CD8-positive, alpha-beta T cell (primary cell): ENCODE measurements at regions of chr17 and their contacts with region 1.

Region 1: GRCh38 chr17:11969565-11969964 is 27.7 kb downstream of the ZNF18 start:
- DNase-seq: no peak
- ATAC-seq: no peak
- H3K4me3 ChIP-seq: no peak overlapping the region
- H3K4me3 Mint-ChIP-seq: no peak overlapping the region
- H3K27ac ChIP-seq: no peak overlapping the region
- H3K27ac Mint-ChIP-seq: no peak overlapping the region
- H3K4me1 ChIP-seq: no peaks in the 10 kb centered on the region
- H3K4me1 Mint-ChIP-seq: no peaks in the 10 kb centered on the region
- H3K27me3 ChIP-seq: no peaks in the 10 kb centered on the region
- H3K27me3 Mint-ChIP-seq: no peaks in the 10 kb centered on the region
- CTCF ChIP-seq: no peak

Region 2: DNA sequence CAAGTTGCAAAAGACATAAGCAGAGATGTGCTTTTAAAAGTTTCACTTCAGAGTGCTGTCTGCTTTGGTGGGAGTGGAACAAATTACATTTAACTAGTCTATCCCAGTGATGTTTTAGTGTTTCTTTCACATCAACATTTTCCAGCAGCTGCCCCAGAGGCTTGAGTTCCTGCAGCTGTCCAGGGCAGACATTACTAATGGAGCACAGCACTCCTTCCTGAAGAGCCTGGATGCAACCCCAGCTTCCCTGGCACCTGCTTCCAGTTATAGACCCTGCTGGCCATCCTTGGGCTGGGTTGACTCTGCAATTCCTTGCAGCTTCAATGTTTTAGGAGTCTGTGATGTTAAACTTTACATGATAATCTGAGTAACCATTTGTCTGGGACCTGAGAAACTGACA is 1070.3 kb before region 1 on chr17:
- CTCF ChIA-PET with region 1: no interaction called
- POLR2A ChIA-PET with region 1: no interaction called
- intact Hi-C with region 1: loop called in 1 of 2 experiments (anchors 5 kb)
- DNase-seq: no peak
- ATAC-seq: no peak
- H3K4me3 ChIP-seq: no peak overlapping the region
- H3K4me3 Mint-ChIP-seq: no peak overlapping the region
- H3K27ac ChIP-seq: no peak overlapping the region
- H3K27ac Mint-ChIP-seq: no peak overlapping the region
- H3K4me1 ChIP-seq: no peaks in the 10 kb centered on the region
- H3K4me1 Mint-ChIP-seq: no peaks in the 10 kb centered on the region
- H3K27me3 ChIP-seq: no peaks in the 10 kb centered on the region
- H3K27me3 Mint-ChIP-seq: no peaks in the 10 kb centered on the region
- CTCF ChIP-seq: no peak

Region 3: GRCh38 chr17:11823862-11824261 is 145.7 kb before region 1 on chr17:
- CTCF ChIA-PET with region 1: no interaction called
- POLR2A ChIA-PET with region 1: no interaction called
- intact Hi-C with region 1: no loop called
- DNase-seq: no peak
- ATAC-seq: no peak
- H3K4me3 ChIP-seq: no peak overlapping the region
- H3K4me3 Mint-ChIP-seq: no peak overlapping the region
- H3K27ac ChIP-seq: no peak overlapping the region
- H3K27ac Mint-ChIP-seq: no peak overlapping the region
- H3K4me1 ChIP-seq: no peaks in the 10 kb centered on the region
- H3K4me1 Mint-ChIP-seq: no peaks in the 10 kb centered on the region
- H3K27me3 ChIP-seq: no peaks in the 10 kb centered on the region
- H3K27me3 Mint-ChIP-seq: peaks cover 4% of the 10 kb centered on the region
- CTCF ChIP-seq: no peak